Cardiac septum (tissue), 1 donor: ENCODE measurements at regions of chr5 and their contacts with region 1.

Region 1: DNA sequence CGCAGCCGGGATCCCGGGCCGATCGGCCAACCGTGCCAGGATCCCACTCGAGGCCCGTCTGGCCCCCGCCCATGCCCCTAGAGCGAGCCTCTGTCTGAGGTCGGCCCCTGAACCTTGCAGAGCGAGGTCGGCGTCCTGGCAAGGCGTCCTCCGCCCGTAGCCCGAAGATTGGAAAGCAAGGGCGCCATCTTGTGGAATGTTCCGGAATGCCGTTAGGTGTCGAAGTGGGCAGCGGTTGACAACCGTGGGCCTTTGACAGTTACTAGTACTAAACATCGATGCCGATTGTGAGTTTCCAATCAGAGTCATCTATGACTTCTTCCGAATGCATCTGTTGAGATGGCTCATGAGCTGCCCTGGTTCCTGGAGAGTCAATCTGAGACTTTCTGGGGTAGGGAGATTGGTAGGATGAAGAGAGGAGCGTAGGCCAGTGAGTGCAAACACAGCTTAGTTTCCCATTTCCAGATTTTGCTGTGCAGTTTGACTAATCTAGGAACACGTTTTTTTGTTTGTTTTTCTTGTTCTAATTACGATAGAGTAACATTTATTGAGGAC is 923 bp upstream of the PLK2 start:
- DNase-seq: peak; percentile 96

Region 2: DNA sequence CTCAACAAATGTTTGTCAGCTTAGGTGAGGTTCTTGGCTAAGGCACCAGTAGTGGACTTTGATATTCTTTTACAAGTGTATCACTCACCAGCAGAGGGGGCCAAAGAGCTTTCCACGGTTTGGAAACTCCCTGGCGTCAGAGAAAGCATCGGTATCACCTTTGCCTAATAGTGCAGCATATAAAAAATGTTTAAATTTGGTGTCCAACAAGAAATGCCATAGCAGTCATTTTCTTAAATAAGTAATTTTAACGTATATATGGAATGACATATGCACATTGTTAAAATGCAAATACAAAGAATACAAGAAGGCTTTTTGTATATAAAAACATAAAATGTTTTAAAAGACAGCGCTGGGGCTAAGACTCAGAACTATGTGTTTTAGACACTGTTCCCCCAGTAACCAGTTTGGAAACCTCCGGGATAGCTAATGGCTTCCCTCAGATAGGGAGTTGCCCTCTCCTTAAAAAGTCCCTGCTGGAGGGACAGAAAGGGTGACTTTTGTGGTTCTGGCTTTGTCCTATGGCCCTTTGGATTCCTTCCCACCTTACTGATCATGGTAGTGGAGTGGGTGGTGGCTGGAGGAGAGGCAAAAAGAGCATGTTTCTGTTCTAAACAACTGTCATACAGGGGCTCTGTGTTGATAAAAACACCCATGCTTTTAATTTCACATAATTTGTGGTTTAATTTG is 1162.4 kb before region 1 on chr5:
- intact Hi-C with region 1: loop called (anchors 1 kb)
- DNase-seq: peak; percentile 82

Region 3: DNA sequence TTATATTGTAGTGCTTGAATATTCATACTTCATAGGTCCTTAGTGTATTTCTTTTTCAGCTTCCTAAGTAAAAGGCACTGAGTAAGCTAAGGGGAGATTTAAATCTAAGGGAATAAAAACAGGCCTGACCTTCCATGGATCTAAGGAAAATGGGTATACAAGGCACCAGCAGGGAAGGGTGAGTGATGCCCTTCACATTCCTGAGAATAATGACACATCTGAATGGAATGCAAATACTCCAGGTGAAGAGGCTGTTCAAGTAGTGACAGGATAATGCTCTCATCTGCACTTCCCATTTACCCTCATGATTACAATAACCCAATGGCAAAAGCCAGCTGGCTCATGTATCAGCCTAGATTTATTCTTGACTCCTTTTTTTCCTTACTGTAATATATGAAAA is 762.0 kb before region 1 on chr5:
- intact Hi-C with region 1: loop called (anchors 5 kb)
- DNase-seq: no peak

Region 4: DNA sequence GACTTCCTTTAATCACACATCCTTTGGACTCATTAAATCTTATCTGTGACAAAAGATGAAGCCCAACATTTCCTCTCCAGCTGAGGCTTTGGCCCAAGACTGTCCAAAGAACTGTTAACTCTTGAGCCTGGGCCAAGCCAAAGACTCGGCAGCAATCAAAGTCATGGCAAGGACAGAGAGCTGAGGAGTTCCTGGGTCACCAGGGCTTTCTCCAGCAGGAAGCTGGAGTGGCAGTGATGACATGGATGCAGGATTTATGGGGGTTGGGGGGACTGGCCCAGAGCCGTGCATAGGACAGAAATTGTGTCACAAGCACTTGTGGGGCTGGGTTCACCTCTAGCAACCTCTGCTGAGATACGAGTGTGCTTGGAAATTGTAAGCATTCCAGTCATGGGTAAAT is 441.2 kb before region 1 on chr5:
- intact Hi-C with region 1: loop called (anchors 5 kb)
- DNase-seq: peak; percentile 83

Region 5: GRCh38 chr5:58240286-58240685 is 220.5 kb before region 1 on chr5:
- intact Hi-C with region 1: loop called (anchors 5 kb)
- DNase-seq: no peak